ENCODE measurements at regions of chr11 and their contacts with region 1.

Region 1: DNA sequence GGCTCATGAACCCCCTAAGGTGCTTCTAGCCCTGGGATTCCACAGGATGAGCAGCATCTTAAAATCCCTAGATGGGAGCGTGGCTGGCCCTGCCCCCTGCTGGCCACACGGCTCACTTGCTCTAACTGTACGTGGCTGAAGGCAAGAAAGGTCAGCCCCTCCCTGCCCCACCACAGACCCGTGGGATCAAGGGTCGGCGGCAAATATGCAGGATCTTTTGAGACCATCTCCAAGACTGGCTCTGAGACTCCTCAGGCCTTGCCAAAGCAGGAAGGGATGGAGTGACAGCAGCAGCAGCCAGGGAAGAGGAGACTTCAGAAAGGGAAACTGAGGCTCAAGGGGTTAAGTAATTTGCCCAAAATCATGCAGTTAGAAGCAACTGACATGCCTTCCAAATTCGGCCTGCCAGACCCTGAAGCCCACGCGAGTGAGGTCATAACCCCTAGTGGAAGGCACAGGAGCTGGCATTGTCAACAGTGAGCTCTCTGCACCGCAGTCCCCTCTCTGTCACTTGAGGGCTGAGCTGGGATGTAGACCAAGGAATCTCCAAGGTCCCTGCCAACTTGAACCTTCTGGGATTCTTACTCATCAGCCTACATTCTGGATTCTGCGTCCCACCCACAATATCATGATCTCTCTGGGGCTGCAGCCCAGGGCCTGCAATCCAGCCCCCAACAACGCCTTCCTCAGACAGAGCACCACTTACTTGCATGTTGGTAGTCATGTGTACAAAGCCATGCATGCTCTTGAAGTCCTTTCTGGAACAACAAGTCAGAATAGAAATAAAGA is 31.4 kb downstream of the CREB3L1 start:
- DNase-seq: peak; percentile 22 to 78 (median 65)
- ATAC-seq: peak; percentile 90
- H3K4me3 ChIP-seq: no peak overlapping the region
- H3K4me3 Mint-ChIP-seq: no peak overlapping the region
- H3K27ac ChIP-seq: no peak overlapping the region
- H3K27ac Mint-ChIP-seq: no peak overlapping the region
- H3K4me1 ChIP-seq: peaks cover 15% of the 10 kb centered on the region
- H3K4me1 Mint-ChIP-seq: peaks cover 11% of the 10 kb centered on the region
- H3K27me3 ChIP-seq: no peaks in the 10 kb centered on the region
- H3K27me3 Mint-ChIP-seq: no peaks in the 10 kb centered on the region
- CTCF ChIP-seq: peak; percentile 85

Region 2: GRCh38 chr11:46149342-46149741 is 159.5 kb before region 1 on chr11:
- CTCF ChIA-PET with region 1: no interaction called
- POLR2A ChIA-PET with region 1: no interaction called
- intact Hi-C with region 1: no loop called
- DNase-seq: no peak
- ATAC-seq: no peak
- H3K4me3 ChIP-seq: no peak overlapping the region
- H3K4me3 Mint-ChIP-seq: no peak overlapping the region
- H3K27ac ChIP-seq: no peak overlapping the region
- H3K27ac Mint-ChIP-seq: no peak overlapping the region
- H3K4me1 ChIP-seq: no peaks in the 10 kb centered on the region
- H3K4me1 Mint-ChIP-seq: no peaks in the 10 kb centered on the region
- H3K27me3 ChIP-seq: no peaks in the 10 kb centered on the region
- H3K27me3 Mint-ChIP-seq: peaks cover 5% of the 10 kb centered on the region
- CTCF ChIP-seq: no peak

Region 3: DNA sequence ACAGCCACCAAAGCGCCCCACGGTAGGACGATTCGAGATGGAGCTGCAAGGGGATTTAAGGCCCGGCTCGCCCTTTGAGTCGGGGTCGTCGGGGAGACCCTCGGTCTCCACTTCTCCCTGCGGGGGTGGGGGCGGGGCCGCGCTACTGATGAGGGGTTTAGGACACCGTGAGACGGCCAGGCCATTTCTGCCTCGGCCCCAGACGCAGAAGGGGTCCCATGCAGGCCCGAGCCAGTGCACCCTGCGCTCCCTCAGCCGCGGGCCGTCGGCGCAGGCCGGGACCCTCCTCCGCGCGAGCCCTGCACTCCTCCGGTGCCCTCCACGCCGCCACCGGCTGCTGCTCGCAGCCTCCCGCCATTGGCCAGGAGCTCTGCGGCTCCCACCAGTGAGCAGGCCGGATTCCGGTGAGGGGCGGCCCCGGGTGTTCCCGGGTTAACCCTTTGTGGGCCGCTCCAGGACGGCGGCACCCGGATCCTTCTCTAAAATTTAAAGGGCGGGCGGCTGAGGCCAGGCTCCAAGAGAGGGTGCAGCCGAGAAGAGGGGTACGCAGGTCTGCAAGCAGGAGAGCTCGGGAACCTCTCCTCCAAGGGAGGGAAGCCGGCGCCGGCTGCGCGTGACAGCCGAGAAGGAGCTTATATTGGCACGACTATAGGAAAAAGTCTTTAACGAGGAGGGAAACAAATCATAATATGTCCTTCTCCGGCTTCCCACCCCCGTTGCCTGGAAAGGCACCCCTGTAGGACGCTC is 13.3 kb before region 1 on chr11:
- CTCF ChIA-PET with region 1: interaction called, 25 read pairs
- POLR2A ChIA-PET with region 1: interaction called, 5 read pairs
- intact Hi-C with region 1: no loop called
- DNase-seq: peak; percentile 32 to 83 (median 76)
- ATAC-seq: peak; percentile 100
- H3K4me3 ChIP-seq: peak overlapping the region; percentile 54 to 57
- H3K4me3 Mint-ChIP-seq: peak overlapping the region; percentile 85
- H3K27ac ChIP-seq: no peak overlapping the region
- H3K27ac Mint-ChIP-seq: no peak overlapping the region
- H3K4me1 ChIP-seq: peaks cover 13% of the 10 kb centered on the region
- H3K4me1 Mint-ChIP-seq: peaks cover 7% of the 10 kb centered on the region
- H3K27me3 ChIP-seq: peaks cover 5 to 8% of the 10 kb centered on the region in 2 experiments
- H3K27me3 Mint-ChIP-seq: peaks cover 21% of the 10 kb centered on the region
- CTCF ChIP-seq: no peak

Region 4: GRCh38 chr11:46332568-46333393 is 24.0 kb after region 1 on chr11:
- CTCF ChIA-PET with region 1: interaction called, 153 read pairs
- POLR2A ChIA-PET with region 1: interaction called, 8 read pairs
- intact Hi-C with region 1: no loop called
- DNase-seq: peak in 7 of 9 experiments; percentile 36 to 71 (median 58)
- ATAC-seq: peak; percentile 32
- H3K4me3 ChIP-seq: peak overlapping the region; percentile 43 to 54
- H3K4me3 Mint-ChIP-seq: peak overlapping the region; percentile 86
- H3K27ac ChIP-seq: peak overlapping the region in 1 of 2 experiments; percentile 6
- H3K27ac Mint-ChIP-seq: peak overlapping the region; percentile 95
- H3K4me1 ChIP-seq: peaks cover 62% of the 10 kb centered on the region
- H3K4me1 Mint-ChIP-seq: peaks cover 61% of the 10 kb centered on the region
- H3K27me3 ChIP-seq: peaks cover 0 to 12% of the 10 kb centered on the region in 2 experiments
- H3K27me3 Mint-ChIP-seq: no peaks in the 10 kb centered on the region
- CTCF ChIP-seq: no peak

Region 5: DNA sequence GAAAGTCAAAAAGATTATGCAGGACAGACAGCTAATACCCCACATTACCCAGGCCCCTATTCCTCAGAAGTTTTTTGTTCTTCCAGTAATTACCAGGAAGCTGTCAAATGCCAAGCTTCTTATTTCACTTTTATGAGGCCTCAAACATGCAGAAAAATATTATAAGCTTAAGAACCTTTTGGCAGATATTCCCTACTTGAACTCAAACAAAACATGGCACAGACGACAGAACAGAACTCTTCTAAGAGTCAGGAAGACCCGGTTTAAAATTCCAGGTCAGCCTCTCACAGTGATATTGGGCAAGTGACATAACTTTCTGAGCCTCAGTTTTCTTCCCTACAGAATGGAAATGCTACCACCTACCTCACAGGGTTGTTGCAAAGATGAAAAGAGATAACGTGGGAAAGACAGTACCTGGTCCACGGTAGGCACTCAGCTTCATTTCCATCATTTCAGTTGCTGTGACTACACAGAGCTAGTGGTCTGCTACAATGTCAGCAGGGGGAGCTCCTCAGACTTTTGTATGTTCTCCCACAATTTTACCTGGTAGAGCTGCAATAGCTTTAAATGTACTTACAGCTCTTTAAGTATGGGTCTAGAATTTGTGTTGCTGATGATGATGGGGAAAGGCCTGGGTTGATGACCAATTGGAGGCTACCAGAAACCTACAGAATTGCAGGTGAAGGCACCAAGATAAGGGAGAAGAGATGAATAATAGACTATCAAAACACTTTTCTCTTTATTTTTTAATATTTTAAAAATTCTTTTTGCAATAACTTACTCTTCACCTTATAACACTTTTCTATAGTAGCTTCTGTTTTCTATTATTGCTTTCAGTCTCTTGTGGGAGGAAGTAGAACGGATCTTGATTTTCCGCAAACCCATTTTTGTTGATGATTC is 181.1 kb after region 1 on chr11:
- CTCF ChIA-PET with region 1: no interaction called
- POLR2A ChIA-PET with region 1: no interaction called
- intact Hi-C with region 1: no loop called
- DNase-seq: peak in 7 of 9 experiments; percentile 5 to 61 (median 32)
- ATAC-seq: peak; percentile 59
- H3K4me3 ChIP-seq: no peak overlapping the region
- H3K4me3 Mint-ChIP-seq: no peak overlapping the region
- H3K27ac ChIP-seq: no peak overlapping the region
- H3K27ac Mint-ChIP-seq: no peak overlapping the region
- H3K4me1 ChIP-seq: no peaks in the 10 kb centered on the region
- H3K4me1 Mint-ChIP-seq: peaks cover 11% of the 10 kb centered on the region
- H3K27me3 ChIP-seq: no peaks in the 10 kb centered on the region
- H3K27me3 Mint-ChIP-seq: no peaks in the 10 kb centered on the region
- CTCF ChIP-seq: peak; percentile 61

Measured in CD8-positive, alpha-beta T cell (primary cell).